ENCODE measurements at regions of chr10 and their contacts with region 1.

Region 1: DNA sequence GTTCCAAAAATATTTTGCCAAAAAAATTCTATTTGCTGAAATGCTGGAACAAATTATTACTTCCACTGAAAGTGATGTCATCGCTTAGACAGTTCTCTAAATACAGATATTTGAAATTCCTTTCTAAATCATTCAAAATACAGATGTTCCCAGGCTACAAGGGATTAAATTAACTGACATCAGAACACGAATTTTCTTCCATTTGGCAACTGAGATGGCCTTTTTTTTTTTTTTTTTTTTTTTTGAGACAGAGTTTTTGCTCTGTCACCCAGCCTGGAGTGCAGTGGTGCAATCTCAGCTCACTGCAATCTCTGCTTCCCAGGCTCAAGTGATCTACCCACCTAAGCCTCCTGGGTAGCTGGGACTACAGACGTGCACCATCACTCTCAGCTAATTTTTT is 57.0 kb downstream of the P4HA1 start:
- DNase-seq: peak; percentile 90
- H3K4me3 ChIP-seq: no peak overlapping the region
- H3K27me3 ChIP-seq: no peaks in the 10 kb centered on the region
- CTCF ChIP-seq: no peak

Region 2: DNA sequence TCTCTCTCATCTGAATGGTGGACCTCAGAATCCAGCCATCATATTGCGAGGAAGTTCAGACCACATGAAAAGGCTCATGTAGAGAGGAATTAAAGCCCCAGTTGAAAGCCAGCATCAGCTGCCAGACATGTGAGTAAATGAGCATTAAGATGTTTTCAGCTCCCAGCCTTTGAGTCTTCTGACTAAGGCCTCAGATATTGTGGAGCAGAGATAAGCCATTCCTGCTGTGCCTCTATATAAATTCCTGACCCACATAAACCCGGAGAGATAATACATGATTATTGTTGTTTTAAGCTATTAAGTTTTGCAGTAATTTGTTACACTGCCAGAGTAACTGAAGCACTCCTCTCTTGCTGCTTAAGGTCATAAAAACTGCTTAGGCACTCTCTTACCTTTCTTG is 142.9 kb after region 1 on chr10:
- CTCF ChIA-PET with region 1: no interaction called
- POLR2A ChIA-PET with region 1: no interaction called
- DNase-seq: no peak
- H3K4me3 ChIP-seq: no peak overlapping the region
- H3K27me3 ChIP-seq: no peaks in the 10 kb centered on the region
- CTCF ChIP-seq: no peak

Region 3: DNA sequence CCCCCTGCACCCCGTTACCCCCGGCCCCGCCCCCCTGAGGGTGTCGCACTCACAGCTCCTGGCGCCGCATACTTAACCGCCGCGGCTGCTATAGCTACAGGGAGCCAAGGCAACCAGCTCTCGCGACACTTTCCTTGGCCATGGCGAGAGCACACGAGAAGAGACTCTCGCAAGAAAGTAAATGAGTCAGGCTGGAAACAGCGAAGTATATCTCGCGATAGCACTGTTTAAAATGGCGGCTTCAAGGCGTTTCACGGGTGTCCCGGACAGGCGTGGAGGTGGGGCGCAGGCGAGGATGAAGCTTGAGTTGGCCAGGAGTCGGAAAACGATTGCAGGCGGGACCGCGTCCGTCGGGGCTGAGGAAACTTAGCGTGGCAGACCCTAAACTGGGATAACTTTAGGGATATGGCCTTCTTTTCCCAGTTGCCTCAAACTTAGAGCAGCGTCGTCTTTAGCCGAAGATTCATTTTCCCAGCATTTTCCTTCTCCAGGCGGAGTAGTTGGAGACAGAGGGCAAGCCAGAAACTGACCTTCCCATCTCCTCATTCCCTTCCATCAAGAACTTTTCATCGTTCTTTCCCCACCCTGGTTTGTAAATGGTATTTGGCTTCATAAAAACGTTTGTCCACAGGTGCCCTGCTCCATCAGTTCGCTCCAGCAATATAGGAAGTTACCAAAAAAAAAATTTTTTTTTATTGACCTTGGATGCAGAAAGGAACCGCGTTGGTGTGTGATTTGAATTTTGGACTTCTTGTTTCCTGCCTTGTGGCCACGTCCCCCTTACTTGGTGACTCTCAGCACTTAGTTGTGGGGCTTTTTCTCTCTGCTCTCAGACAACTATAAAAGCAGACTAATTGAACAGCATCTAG is 586.5 kb after region 1 on chr10:
- CTCF ChIA-PET with region 1: no interaction called
- POLR2A ChIA-PET with region 1: interaction called, 10 read pairs
- DNase-seq: peak; percentile 93
- H3K4me3 ChIP-seq: peak overlapping the region; percentile 94
- H3K27me3 ChIP-seq: no peaks in the 10 kb centered on the region
- CTCF ChIP-seq: no peak

Measured in BJ (cell line).